ENCODE measurements at regions of chr9 and their contacts with region 1.

Region 1: GRCh38 chr9:129495534-129496325 is 125.2 kb downstream of the C9orf50 start:
- DNase-seq: peak; percentile 95 to 99
- ATAC-seq: peak; percentile 77

Region 2: DNA sequence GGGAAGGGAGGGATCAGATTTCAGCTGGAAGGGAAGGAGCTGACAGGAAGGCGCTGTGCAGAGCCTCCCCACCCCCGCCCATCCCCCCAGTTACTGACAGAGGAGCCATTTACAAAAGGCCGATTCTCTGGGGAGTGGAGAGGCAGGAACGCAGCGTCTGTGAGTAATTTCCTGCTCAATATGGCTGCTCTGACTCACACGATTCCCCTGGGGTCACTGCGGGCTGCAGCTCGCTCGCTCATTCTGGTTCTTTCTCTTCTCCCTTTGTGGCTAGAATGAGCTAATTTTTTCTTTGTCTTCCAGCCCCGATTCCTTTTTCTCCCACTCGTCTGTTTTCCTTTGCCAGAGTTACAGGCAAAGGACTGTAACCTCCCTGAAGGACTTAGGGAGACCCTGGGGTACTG is 355.7 kb before region 1 on chr9:
- intact Hi-C with region 1: loop called in 1 of 2 experiments (anchors 10 kb)
- DNase-seq: peak; percentile 84 to 93
- ATAC-seq: peak; percentile 80

Region 3: DNA sequence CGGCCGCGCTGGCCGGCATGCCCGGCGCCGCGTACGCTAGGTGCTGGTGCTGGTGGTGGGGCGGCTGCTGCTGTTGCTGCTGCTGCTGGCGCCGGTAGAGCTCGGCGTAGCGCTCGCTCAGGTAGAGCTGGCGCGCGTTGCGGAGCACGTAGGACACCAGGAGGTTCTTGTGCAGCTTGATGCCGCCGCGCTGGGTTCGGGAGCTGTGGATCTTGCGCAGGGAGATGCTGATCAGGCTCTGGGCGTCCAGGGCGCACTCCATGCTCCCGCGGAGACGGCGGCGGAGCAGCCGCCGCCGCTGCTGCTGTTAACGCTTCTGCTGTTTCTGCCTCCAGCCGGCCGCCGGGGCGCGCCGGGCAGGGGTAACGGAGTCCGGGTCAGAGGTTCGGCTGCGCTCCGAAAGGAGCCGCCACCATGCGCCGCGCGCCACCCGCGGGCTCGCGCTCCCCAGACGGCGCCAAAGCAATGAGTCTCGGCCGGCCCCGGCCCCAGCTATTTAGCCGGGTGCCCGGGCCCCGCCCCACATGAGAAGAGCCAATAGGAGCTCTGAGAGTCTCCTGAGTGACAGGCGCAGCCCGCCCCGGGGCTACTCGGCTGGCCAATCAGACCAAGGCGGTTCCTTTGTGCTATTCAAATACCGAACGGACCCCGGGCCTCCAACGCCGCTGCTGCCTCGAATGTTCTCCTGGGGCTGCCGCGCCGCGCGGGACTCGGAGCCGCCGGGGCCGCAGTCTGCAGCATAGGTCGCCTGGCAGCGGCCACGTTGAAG is 317.8 kb before region 1 on chr9 and contains the start of gene IER5L:
- intact Hi-C with region 1: loop called in 1 of 2 experiments (anchors 10 kb)
- DNase-seq: peak; percentile 95 to 96
- ATAC-seq: peak; percentile 67
- total RNA-seq, gene IER5L: 4.3 to 8.8 TPM

Region 4: DNA sequence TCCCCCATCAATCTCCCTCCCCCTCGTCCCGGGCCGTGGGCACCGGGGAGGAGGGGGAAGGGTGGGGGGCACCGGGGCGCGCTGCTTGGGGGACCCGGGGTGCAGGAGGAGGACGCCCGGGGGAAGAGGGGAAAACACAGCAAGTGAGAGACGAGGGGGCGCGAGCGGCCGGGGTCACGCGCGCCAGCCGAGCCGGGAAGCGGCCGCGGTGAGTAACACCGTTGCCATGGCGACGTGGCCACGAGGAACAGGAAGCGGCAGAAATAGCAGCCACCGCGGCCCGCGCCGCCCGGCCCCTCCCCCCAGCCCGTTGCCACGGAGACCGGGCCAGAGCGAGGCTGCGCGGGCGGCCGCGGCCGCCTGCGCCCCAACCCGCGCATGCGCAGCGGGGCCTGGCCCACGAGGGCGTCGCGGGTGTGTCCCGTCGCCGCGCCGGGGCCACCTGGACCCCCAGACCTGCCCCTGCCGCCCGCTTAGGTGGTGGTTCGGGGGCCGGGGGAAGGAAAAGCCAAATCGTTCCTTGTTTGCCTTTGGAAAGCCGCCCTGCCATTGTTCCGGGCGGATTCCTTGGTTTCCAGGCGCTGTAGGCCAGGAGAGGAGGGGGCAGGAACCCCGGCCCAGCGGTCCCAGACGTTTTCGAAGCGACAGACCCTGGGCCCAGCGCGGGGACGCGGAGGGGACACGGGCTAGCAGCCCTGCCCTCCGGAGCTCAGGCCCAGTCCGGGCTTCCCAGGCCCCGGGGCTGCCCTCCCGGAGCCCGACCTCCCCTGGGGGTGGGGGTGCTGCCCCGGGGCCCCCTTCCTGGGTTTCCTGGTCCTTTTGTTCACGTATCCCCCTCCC is 82.0 kb before region 1 on chr9:
- intact Hi-C with region 1: loop called in 1 of 2 experiments (anchors 10 kb)
- DNase-seq: peak; percentile 99 to 100
- ATAC-seq: peak; percentile 90

Region 5: GRCh38 chr9:129432297-129433154 is 63.2 kb before region 1 on chr9:
- intact Hi-C with region 1: no loop called
- DNase-seq: no peak
- ATAC-seq: peak; percentile 27

Region 6: DNA sequence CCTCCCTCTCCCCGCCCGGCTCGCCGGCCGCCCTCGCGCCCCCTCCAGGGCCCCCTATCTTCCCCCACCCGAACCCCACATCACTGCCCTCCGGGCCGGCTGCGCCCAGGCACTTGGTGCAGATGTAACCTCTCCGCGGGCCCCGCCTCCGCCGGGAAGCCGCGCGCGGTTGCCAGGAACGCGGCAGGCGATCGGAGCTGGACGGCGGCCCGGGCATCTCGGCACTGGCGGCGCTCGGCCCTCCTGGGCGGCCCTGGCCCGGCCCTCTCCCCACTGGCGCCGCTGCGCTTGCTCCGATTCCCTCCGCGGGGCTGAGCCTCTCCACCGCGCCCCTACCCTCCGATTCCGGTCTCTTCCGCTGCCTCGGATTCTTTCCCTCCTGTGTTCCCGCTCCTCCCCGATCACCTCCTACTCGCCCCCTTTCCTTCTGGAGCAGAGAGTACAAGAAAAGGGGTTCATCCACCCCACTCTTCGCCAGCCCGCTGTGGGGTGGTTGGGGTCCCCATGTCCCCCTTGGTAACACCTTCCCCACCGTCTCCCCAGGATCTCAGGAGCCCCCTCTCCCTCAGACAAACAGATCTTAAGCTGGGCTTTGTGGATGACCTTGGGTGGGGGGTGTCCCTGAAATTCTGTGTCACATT is 54.6 kb after region 1 on chr9:
- intact Hi-C with region 1: loop called in 1 of 2 experiments (anchors 10 kb)
- DNase-seq: peak; percentile 51 to 63
- ATAC-seq: peak; percentile 82

Region 7: DNA sequence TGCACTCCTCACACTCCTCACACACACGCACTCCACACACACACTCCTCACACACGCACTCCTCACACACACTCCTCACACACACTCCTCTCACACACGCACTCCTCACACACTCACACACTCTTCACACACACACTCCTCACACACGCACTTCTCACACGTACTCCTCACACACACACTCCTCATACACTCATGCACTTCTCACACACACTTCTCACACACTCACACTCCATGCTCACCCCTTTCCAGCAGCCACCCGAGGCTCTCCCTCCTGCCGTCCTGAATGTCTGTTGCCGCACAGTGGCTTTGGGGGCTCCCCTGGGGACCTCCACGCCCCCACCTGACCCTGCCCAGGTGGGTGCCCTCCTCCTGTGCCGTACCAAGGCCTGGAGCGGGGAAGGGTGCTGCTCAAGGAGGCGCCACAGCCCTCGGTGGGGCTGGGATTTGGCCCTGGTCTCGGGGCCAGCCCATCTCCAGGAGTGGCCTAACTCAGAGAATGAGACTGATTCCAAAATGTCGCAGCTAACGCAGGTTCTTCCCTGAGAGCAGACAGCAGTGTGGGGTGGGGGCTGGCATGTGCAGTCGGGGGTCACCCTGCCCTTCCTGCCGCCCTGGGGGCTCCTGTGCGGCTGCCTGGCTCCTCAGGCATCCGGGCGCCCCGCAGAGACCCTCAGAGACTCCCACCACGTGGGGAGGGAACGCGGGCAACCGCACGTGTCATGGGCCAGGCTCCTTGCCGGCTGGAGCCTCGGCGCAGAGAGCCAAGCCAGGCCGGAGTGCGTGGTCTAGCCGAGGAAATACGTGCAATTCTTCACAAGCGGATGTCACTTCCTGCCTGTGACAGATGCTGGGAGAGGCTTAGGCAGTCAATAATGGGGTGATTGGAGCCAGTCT is 80.8 kb after region 1 on chr9:
- intact Hi-C with region 1: no loop called
- DNase-seq: no peak
- ATAC-seq: no peak

Region 8: GRCh38 chr9:129597355-129598088 is 101.8 kb after region 1 on chr9:
- intact Hi-C with region 1: loop called in 1 of 2 experiments (anchors 5 kb)
- DNase-seq: peak; percentile 74 to 75
- ATAC-seq: peak; percentile 79

Region 9: DNA sequence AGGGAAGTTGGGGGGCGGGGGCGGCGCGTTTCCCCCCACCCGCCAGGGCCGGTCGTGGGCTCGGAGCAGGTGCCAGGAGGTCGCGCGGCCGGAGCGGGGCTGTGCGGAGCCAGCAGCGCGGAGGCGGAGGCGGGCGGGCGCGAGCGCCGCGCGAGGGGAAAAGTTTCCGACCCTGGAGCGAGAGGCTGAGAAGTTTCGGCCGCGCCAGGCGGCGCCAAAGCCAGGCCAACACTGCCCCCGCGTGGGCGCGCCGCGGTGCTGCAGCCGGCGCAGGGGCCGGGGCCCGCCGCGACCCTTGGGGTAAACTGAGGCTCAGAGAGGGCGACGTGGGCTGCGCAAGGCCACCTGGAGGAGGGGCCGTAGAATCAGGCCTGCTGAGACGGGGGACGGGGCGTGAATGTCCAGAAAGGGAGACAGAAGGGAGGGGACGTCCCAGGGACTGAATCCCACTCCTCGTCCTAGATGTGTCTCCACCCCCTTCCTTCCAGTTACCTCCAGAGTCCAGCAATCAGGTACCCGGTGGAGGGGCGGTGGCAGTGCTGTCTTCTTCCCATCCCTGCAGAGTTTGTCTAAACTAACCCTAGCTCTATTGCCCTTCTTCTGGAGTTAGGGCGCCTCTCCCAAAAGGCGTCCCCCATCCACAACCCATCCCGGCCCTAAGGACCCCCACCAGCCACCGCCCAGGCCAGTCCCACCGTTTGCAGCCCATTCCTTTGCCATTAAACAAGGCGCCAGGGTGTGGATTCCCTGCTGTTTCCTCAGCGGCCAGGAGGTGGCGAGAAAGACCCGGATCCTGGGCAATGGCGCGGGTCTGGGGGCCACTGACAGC is 115.0 kb after region 1 on chr9:
- intact Hi-C with region 1: loop called (anchors 5 to 10 kb)
- DNase-seq: peak; percentile 68 to 81
- ATAC-seq: peak; percentile 36